T-cell (primary cell): ENCODE measurements at regions of chr10 and their contacts with region 1.

Region 1: DNA sequence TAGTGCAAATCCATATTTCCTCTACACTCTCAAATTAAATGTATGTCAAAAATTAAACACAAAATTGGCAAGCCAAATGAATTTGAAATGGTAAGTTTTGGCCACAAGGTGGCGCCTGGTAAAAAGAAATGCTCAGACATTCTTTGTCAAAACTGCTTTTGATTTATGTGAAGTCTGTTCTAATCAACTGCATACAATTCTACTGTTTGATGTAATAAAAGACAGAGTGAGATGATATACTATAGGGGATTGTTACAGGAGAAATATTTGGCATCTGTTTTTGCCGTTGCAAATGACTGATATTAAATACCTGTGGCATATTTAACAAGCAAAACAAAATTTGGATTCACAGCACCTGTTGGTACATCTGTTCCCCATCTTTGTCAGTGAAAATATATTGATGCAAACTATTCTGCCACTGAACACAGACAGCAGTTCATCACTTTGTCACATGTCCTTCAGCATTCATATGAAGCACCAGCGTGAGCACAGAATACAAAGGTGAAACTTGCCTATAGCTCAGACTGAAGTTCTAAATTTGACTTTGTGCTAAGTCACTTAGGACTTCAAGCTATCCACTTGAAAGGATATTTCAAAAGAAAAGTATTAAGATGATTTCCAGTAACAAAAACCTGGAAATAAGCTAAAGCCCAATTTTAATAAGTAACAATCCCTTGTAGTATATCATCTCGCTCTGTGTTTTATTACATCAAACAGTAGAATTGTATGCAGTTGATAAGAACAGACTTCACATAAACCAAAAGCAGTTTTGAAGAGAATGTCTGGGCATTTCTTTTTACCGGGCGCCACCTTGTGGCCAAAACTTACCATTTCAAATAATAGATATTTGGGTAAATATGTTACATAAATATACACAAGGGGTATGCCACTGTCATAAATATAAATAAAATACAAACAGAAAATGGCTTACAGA is 10.2 kb upstream of the CH25H start:
- DNase-seq: peak; percentile 21 to 79 (median 55)
- ATAC-seq: peak; percentile 55 to 69 (median 66)
- H3K4me3 ChIP-seq: no peak overlapping the region
- H3K4me3 Mint-ChIP-seq: no peak overlapping the region
- H3K27ac ChIP-seq: peak overlapping the region; percentile 36
- H3K27ac Mint-ChIP-seq: peak overlapping the region in 1 of 2 donors; percentile 47
- H3K4me1 ChIP-seq: peaks cover 3 to 4% of the 10 kb centered on the region in 2 experiments
- H3K4me1 Mint-ChIP-seq: peaks cover 8 to 11% (median 8%) of the 10 kb centered on the region in 3 donors
- H3K27me3 ChIP-seq: no peaks in the 10 kb centered on the region
- H3K27me3 Mint-ChIP-seq: no peaks in the 10 kb centered on the region

Region 2: GRCh38 chr10:89029785-89030437 is 187.4 kb before region 1 on chr10:
- CTCF ChIA-PET with region 1: interaction called, 36 to 40 read pairs
- POLR2A ChIA-PET with region 1: no interaction called
- DNase-seq: peak; percentile 24 to 83 (median 54)
- ATAC-seq: peak in 3 of 4 experiments; percentile 62 to 78 (median 64)
- H3K4me3 ChIP-seq: no peak overlapping the region
- H3K4me3 Mint-ChIP-seq: no peak overlapping the region
- H3K27ac ChIP-seq: no peak overlapping the region
- H3K27ac Mint-ChIP-seq: peak overlapping the region in 1 of 2 donors; percentile 50
- H3K4me1 ChIP-seq: peaks cover 0 to 3% of the 10 kb centered on the region in 2 experiments
- H3K4me1 Mint-ChIP-seq: peaks cover 7 to 9% (median 7%) of the 10 kb centered on the region in 3 donors
- H3K27me3 ChIP-seq: no peaks in the 10 kb centered on the region
- H3K27me3 Mint-ChIP-seq: no peaks in the 10 kb centered on the region

Region 3: DNA sequence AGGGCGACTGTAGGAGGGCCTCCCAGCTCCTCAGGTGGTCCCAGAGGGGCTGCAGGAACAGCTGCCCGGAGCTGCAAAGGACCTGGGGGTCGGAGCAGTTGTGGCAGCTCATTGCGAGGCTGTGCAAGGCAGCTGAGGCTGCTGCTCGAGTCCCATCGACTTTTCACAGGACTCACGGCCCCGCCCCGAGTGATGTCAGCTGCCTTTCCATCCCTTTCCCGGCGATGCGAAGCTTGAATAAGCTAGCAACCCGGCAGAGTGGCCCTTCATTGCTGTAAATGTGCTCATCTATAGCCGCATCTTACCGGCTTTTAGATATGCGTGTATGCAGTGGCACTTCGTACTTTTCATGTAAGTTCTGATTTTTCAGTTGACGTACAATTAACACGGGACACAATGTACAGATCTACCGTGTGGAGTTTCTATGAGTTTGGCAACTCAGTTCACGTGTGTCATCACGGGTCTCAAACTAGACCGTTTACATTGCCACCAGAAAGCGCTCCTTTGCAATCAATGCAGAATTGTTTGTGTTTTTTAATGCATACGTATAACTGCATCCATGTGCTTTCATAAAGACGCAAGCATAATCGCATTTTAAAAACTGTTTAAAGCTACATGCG is 10.0 kb before region 1 on chr10 and contains the start of gene CH25H:
- CTCF ChIA-PET with region 1: interaction called, 6 to 29 read pairs
- POLR2A ChIA-PET with region 1: interaction called in 1 of 2 experiments, 3 read pairs
- DNase-seq: peak in 23 of 35 experiments; percentile 3 to 62 (median 24)
- ATAC-seq: peak; percentile 47 to 66 (median 58)
- H3K4me3 ChIP-seq: peak within 1 kb of the TSS; percentile 53 to 84
- H3K4me3 Mint-ChIP-seq: peak within 1 kb of the TSS; percentile 76 to 84 (median 78)
- H3K27ac ChIP-seq: no peak within 1 kb of the TSS
- H3K27ac Mint-ChIP-seq: no peak within 1 kb of the TSS
- H3K4me1 ChIP-seq: peaks cover 10 to 21% of the 10 kb centered on the region in 2 experiments
- H3K4me1 Mint-ChIP-seq: peaks cover 15% of the 10 kb centered on the region in 3 donors
- H3K27me3 ChIP-seq: peaks cover 11 to 31% of the 10 kb centered on the region in 2 experiments
- H3K27me3 Mint-ChIP-seq: peaks cover 39 to 40% of the 10 kb centered on the region in 2 donors
- total RNA-seq, gene CH25H: 0.21 to 1.0 TPM in 2 of 5 donors, not detected in the others

Region 4: GRCh38 chr10:89251409-89252224 is 34.3 kb after region 1 on chr10 and contains the start of gene LIPA:
- CTCF ChIA-PET with region 1: interaction called in 1 of 2 experiments, 15 read pairs
- POLR2A ChIA-PET with region 1: interaction called in 1 of 2 experiments, 3 read pairs
- DNase-seq: peak; percentile 81 to 98 (median 94)
- ATAC-seq: peak; percentile 94 to 96 (median 94)
- H3K4me3 ChIP-seq: peak within 1 kb of the TSS; percentile 73 to 89
- H3K4me3 Mint-ChIP-seq: peak within 1 kb of the TSS; percentile 73 to 87 (median 86)
- H3K27ac ChIP-seq: peak within 1 kb of the TSS; percentile 71
- H3K27ac Mint-ChIP-seq: peak within 1 kb of the TSS; percentile 61 to 71
- H3K4me1 ChIP-seq: peaks cover 7 to 14% of the 10 kb centered on the region in 2 experiments
- H3K4me1 Mint-ChIP-seq: peaks cover 23 to 25% (median 23%) of the 10 kb centered on the region in 3 donors
- H3K27me3 ChIP-seq: no peaks in the 10 kb centered on the region
- H3K27me3 Mint-ChIP-seq: no peaks in the 10 kb centered on the region
- total RNA-seq, gene LIPA: 23.2 to 38.2 (median 33.6) TPM

Region 5: GRCh38 chr10:89516149-89516832 is 299.0 kb after region 1 on chr10:
- CTCF ChIA-PET with region 1: no interaction called
- POLR2A ChIA-PET with region 1: no interaction called
- DNase-seq: no peak
- ATAC-seq: no peak
- H3K4me3 ChIP-seq: no peak overlapping the region
- H3K4me3 Mint-ChIP-seq: no peak overlapping the region
- H3K27ac ChIP-seq: no peak overlapping the region
- H3K27ac Mint-ChIP-seq: no peak overlapping the region
- H3K4me1 ChIP-seq: no peaks in the 10 kb centered on the region
- H3K4me1 Mint-ChIP-seq: no peaks in the 10 kb centered on the region
- H3K27me3 ChIP-seq: no peaks in the 10 kb centered on the region
- H3K27me3 Mint-ChIP-seq: peaks cover 0 to 4% of the 10 kb centered on the region in 2 donors

Region 6: GRCh38 chr10:89563311-89563710 is 346.0 kb after region 1 on chr10:
- CTCF ChIA-PET with region 1: interaction called in 1 of 2 experiments, 11 read pairs
- POLR2A ChIA-PET with region 1: no interaction called
- DNase-seq: no peak
- ATAC-seq: no peak
- H3K4me3 ChIP-seq: no peak overlapping the region
- H3K4me3 Mint-ChIP-seq: no peak overlapping the region
- H3K27ac ChIP-seq: no peak overlapping the region
- H3K27ac Mint-ChIP-seq: no peak overlapping the region
- H3K4me1 ChIP-seq: no peaks in the 10 kb centered on the region
- H3K4me1 Mint-ChIP-seq: no peaks in the 10 kb centered on the region
- H3K27me3 ChIP-seq: peaks cover 0 to 5% of the 10 kb centered on the region in 2 experiments
- H3K27me3 Mint-ChIP-seq: peaks cover 18 to 27% of the 10 kb centered on the region in 2 donors